Mammary epithelial cell (primary cell): ENCODE measurements at regions of chr9 and their contacts with region 1.

Region 1: GRCh38 chr9:14661421-14662059 is 31.7 kb downstream of the ZDHHC21 start:
- DNase-seq: peak; percentile 12
- H3K4me3 ChIP-seq: no peak overlapping the region
- H3K27ac ChIP-seq: no peak overlapping the region
- H3K4me1 ChIP-seq: no peaks in the 10 kb centered on the region
- H3K27me3 ChIP-seq: no peaks in the 10 kb centered on the region
- CTCF ChIP-seq: peak; percentile 51 to 57

Region 2: DNA sequence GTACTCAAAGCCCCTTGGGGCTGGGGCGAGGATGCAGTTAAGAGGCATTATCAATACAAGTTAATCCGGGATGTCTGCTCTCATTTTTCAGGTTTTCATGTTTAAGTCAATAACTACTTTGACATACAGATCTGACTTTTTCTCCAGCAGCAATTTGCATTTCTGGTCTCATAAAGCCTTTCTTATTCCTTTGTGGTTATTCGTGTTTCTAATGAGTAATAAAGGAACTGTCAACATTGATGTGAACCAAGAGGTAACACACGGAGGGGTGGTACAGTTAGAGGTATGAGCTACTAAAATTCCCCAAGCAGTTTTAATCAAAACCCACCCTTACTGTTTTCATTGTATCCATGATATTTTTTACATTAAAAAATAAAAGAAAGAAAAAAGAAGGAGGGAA is 209.6 kb before region 1 on chr9:
- CTCF ChIA-PET with region 1: no interaction called
- dilution Hi-C with region 1: no loop called
- in situ Hi-C with region 1: loop called in 1 of 2 experiments (anchors 25 kb)
- intact Hi-C with region 1: no loop called
- DNase-seq: no peak
- H3K4me3 ChIP-seq: no peak overlapping the region
- H3K27ac ChIP-seq: no peak overlapping the region
- H3K4me1 ChIP-seq: no peaks in the 10 kb centered on the region
- H3K27me3 ChIP-seq: peaks cover 4% of the 10 kb centered on the region
- CTCF ChIP-seq: no peak